Transverse colon (tissue), 4 donors: ENCODE measurements at regions of chr7 and their contacts with region 1.

Region 1: DNA sequence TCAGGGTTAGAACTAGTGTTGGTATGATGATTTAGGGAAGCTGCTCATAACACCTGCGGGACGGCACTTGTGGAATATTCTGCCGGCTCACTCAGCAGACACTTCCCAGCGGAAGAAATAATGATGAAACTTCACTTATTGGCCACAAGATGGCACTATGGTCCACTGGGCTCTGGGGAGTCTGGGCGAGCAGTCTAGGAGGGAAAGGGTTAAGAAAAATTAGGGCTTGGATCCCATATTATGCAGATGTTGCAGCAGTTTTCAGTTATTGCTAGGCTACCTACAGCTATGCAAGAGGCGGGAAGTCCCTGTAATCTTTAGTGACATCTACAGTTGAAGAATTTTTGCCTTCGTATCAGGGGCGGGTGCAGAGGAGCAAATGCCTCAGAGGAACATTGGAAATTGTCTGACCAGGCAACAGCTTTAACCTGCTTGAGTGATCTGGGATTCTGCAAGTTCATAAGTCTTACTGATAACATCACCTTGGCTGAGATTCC is 238.7 kb upstream of the PRSS58 start:
- DNase-seq: peak; percentile 26
- H3K4me3 ChIP-seq: no peak overlapping the region
- H3K27ac ChIP-seq: no peak overlapping the region
- H3K4me1 ChIP-seq: peaks cover 5 to 34% (median 8%) of the 10 kb centered on the region in 4 donors
- H3K27me3 ChIP-seq: no peaks in the 10 kb centered on the region
- CTCF ChIP-seq: peak; percentile 67 to 88 (median 74)
- EP300 ChIP-seq: no peak
- POLR2A ChIP-seq: no peak

Region 2: GRCh38 chr7:140902303-140902953 is 1594.2 kb before region 1 on chr7:
- in situ Hi-C with region 1: no loop called
- intact Hi-C with region 1: no loop called
- DNase-seq: no peak
- H3K4me3 ChIP-seq: no peak overlapping the region
- H3K27ac ChIP-seq: no peak overlapping the region
- H3K4me1 ChIP-seq: no peaks in the 10 kb centered on the region
- H3K27me3 ChIP-seq: no peaks in the 10 kb centered on the region
- CTCF ChIP-seq: no peak
- EP300 ChIP-seq: no peak
- POLR2A ChIP-seq: no peak

Region 3: DNA sequence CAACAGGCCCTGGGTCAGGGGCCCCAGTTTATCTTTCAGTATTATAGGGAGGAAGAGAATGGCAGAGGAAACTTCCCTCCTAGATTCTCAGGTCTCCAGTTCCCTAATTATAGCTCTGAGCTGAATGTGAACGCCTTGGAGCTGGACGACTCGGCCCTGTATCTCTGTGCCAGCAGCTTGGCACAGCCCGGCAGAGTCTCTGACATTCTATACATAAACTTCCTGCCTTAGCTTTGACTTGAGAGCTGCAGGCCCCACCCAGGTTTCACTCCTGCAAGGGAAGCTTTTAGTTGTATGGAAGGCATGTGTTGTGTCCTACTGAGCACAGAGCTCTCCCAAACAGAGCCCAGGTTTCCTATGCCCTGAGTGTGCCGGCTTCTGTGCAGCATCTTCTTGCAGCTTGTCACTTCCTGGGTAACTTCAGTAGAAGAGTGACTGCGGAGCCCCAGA is 33.2 kb before region 1 on chr7:
- in situ Hi-C with region 1: loop called in 1 of 4 experiments (anchors 5 kb)
- intact Hi-C with region 1: no loop called
- DNase-seq: no peak
- H3K4me3 ChIP-seq: no peak overlapping the region
- H3K27ac ChIP-seq: no peak overlapping the region
- H3K4me1 ChIP-seq: no peaks in the 10 kb centered on the region
- H3K27me3 ChIP-seq: no peaks in the 10 kb centered on the region
- CTCF ChIP-seq: no peak
- EP300 ChIP-seq: no peak
- POLR2A ChIP-seq: no peak

Region 4: GRCh38 chr7:142519083-142520078 is 22.8 kb after region 1 on chr7:
- in situ Hi-C with region 1: no loop called
- intact Hi-C with region 1: no loop called
- DNase-seq: no peak
- H3K4me3 ChIP-seq: no peak overlapping the region
- H3K27ac ChIP-seq: peak overlapping the region; percentile 78 to 84 (median 80)
- H3K4me1 ChIP-seq: peaks cover 3 to 18% (median 14%) of the 10 kb centered on the region in 4 donors
- H3K27me3 ChIP-seq: no peaks in the 10 kb centered on the region
- CTCF ChIP-seq: no peak
- EP300 ChIP-seq: no peak
- POLR2A ChIP-seq: no peak